ENCODE measurements at regions of chr12 and their contacts with region 1.

Region 1: GRCh38 chr12:120649442-120650232 is 9.2 kb downstream of the CABP1 start:
- DNase-seq: peak in 6 of 10 donors; percentile 45 to 91 (median 72)

Region 2: GRCh38 chr12:120583478-120584030 is 66.1 kb before region 1 on chr12:
- intact Hi-C with region 1: loop called (anchors 2 kb)
- DNase-seq: peak; percentile 62 to 97 (median 82)

Region 3: DNA sequence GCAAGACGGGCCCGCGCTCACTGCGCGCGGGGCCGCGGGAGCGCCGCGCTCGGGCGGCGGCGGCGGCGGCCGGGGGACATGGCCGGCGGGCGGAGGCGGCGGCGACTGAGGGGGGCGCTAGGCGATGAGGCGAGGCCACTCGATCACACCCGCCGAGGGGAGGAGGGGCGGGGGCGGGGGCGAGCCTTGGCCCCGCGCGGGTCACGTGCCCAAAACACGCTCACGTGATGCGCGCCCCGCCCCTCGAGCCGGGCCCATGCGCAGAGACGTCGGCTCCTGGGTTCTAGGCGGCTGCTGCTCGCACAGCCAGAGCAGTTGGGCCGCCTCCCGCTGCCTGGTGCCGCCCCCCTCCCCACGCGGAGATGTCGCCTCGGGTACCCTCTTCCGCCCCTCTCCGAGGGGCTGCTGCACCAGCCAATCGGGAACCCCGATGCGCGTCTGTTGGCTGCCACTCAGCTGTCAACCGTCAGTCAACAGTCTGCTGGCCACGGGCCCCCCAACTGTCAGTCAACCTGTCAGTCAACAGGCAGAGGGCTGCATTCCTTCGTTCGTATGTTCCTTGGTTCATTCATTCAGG is 254.6 kb after region 1 on chr12 and contains the start of gene SPPL3:
- intact Hi-C with region 1: no loop called
- DNase-seq: peak; percentile 86 to 98 (median 90)

Region 4: DNA sequence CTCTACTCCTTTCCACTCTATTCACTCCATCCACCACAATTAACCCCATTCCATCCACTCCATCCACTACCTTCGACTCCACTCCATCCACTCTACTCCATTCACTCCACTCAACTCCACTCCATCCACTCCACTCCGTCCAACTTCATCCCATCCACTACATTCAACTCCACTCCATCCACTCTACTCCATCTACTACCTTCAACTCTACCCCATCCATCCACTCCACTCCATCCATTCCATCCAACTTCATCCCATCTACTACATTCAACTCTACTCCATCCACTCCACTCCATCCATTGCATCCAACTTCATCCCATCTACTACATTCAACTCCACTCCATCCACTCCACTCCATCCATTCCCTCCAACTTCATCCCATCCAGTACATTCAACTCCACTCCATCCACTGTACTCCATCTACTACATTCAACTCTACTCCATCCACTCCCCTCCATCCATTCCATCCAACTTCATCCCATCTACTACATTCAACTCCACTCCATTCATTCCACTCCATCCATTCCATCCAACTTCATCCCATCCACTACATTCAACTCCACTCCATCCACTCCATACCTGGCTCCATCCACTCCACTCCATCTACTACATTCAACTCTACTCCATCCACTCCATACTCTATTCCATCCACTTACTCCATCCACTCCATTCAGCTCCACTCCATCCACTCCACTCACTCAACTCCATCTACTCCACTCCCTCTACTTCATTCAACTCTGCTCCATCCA is 345.1 kb after region 1 on chr12:
- intact Hi-C with region 1: no loop called
- DNase-seq: no peak

Measured in posterior cingulate gyrus (tissue), 11 donors.